Psoas muscle (tissue), 8 donors: ENCODE measurements at regions of chr1 and their contacts with region 1.

Region 1: DNA sequence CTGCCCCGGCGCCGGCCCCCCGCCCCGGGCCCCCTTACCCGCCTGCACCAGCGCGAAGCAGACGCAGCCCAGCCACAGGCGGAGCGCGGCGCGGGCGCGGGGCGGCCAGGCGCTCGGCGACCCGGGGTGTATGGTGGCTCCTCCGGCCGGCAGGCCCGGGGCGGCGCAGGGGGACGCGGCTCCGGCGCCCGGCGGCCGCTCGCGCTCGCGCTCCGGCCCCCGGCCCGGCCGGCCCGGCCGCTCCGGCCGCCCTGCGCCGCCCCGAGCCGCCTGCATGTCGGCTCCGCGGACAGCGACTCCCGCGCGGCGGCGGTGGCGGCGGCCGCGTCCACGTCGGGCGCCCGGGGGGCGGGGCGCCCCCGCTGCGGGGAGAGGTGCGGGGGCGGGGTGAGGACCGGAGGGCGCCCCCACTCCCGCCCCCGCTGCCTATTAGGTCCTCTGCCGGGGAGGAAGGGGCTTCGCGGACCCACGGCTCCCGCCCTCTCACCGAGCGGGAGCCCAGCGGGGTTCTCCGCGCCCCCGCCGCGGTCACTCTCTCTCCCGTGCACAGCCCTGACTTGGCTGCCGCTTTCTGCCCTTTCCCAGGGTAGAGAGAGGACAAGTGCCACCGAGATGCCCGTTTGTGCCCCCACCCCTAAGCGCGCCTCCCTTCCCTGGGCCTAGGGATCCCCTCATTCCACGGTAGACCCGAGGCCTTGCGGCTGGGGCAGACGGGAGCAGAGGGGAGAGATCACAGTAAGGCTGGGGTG is at the start of gene FNDC5:
- DNase-seq: no peak
- ATAC-seq: peak; percentile 28 to 69 (median 63)
- H3K4me3 ChIP-seq: peak within 1 kb of the TSS; percentile 63
- H3K27ac ChIP-seq: peak within 1 kb of the TSS; percentile 69
- H3K4me1 ChIP-seq: peaks cover 9% of the 10 kb centered on the region
- H3K27me3 ChIP-seq: no peaks in the 10 kb centered on the region
- CTCF ChIP-seq: no peak
- total RNA-seq, gene FNDC5: 72.8 to 184 (median 86.6) TPM

Region 2: GRCh38 chr1:32716312-32717148 is 154.3 kb before region 1 on chr1:
- intact Hi-C with region 1: loop called (anchors 5 kb)
- DNase-seq: peak; percentile 42 to 68
- ATAC-seq: peak; percentile 48 to 71 (median 56)
- H3K4me3 ChIP-seq: no peak overlapping the region
- H3K27ac ChIP-seq: no peak overlapping the region
- H3K4me1 ChIP-seq: no peaks in the 10 kb centered on the region
- H3K27me3 ChIP-seq: no peaks in the 10 kb centered on the region
- CTCF ChIP-seq: no peak

Region 3: DNA sequence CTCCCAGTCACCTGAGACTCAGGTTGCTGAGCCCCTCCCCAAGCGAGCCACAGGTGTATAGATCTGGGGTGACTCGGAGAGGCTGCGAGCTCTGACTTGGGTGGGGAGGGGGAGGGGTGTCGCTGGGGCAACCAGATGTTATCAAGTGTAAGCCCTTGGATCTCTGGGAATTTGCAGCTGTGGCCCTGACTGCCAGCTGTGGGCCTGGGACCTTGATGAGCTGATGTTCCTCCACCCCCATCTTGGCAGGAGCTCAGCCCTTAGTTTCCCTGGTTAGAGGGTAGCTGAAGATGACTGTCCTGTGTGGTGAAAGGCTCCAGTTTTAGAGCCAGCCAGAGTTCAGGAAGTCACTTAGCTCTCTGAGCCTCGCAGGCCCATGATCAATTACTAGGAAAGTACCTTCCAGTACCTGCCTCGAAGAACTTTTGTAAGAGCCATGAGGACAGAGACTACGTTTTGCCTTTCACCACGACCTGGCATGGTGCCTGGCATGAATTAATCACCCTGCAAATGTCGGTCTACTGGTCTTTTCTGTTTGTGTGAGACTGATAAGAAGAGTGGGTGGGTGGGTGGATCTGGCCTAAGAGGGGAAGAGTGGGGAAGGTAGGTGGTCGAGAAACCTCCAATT is 109.4 kb before region 1 on chr1:
- intact Hi-C with region 1: no loop called
- DNase-seq: peak in 1 of 2 donors; percentile 58
- ATAC-seq: peak; percentile 39 to 66 (median 48)
- H3K4me3 ChIP-seq: no peak overlapping the region
- H3K27ac ChIP-seq: no peak overlapping the region
- H3K4me1 ChIP-seq: peaks cover 7% of the 10 kb centered on the region
- H3K27me3 ChIP-seq: no peaks in the 10 kb centered on the region
- CTCF ChIP-seq: no peak

Region 4: DNA sequence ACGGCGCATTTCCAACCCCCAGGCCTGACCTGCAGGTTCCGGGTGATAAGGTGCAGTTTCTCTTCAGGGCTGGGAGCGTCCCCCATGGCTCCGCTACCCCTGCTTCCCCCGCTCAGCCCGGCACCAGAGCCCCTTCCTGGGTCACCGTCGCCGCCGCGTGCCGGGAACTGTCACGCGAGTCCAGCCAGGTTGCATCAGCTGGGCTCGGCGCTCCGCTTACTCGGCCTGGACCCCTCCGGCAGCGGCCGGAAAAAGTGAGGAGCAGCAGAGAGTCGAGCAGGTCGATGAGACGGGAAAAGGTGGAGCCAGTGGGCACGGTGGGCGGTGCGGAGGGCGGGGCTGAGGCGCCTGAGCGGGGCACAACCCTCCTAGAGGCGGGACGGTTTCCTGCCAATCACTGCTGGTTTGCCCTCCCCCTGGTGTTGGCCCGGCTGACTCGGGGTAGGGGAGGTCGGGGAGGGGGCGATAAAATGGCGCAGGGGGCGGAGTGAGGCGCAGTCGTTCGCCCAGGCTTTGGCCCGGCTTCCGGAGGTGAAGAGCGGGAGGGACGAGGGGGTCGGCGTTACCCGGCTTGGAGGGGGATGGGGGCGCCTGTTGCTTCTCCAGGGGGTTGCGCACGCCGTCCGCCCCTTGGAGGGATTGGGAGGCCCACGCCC is 53.5 kb before region 1 on chr1 and contains the starts of genes S100PBP and YARS1:
- intact Hi-C with region 1: loop called in 1 of 2 experiments (anchors 5 kb)
- DNase-seq: peak; percentile 100
- ATAC-seq: peak; percentile 95 to 97 (median 96)
- H3K4me3 ChIP-seq: peak within 1 kb of the TSS; percentile 74
- H3K27ac ChIP-seq: peak within 1 kb of the TSS; percentile 94
- H3K4me1 ChIP-seq: peaks cover 43% of the 10 kb centered on the region
- H3K27me3 ChIP-seq: no peaks in the 10 kb centered on the region
- CTCF ChIP-seq: no peak
- total RNA-seq, gene S100PBP: 9.7 to 18.1 (median 12.9) TPM
- total RNA-seq, gene YARS1: 36.9 to 90.2 (median 72.4) TPM

Region 5: GRCh38 chr1:32828341-32828740 is 42.4 kb before region 1 on chr1:
- intact Hi-C with region 1: loop called in 1 of 2 experiments (anchors 5 kb)
- DNase-seq: no peak
- ATAC-seq: no peak
- H3K4me3 ChIP-seq: no peak overlapping the region
- H3K27ac ChIP-seq: no peak overlapping the region
- H3K4me1 ChIP-seq: no peaks in the 10 kb centered on the region
- H3K27me3 ChIP-seq: no peaks in the 10 kb centered on the region
- CTCF ChIP-seq: no peak

Region 6: GRCh38 chr1:32907439-32907838 is 36.6 kb after region 1 on chr1:
- intact Hi-C with region 1: no loop called
- DNase-seq: no peak
- ATAC-seq: no peak
- H3K4me3 ChIP-seq: no peak overlapping the region
- H3K27ac ChIP-seq: no peak overlapping the region
- H3K4me1 ChIP-seq: no peaks in the 10 kb centered on the region
- H3K27me3 ChIP-seq: peaks cover 0 to 5% (median 0%) of the 10 kb centered on the region in 3 donors
- CTCF ChIP-seq: no peak

Region 7: DNA sequence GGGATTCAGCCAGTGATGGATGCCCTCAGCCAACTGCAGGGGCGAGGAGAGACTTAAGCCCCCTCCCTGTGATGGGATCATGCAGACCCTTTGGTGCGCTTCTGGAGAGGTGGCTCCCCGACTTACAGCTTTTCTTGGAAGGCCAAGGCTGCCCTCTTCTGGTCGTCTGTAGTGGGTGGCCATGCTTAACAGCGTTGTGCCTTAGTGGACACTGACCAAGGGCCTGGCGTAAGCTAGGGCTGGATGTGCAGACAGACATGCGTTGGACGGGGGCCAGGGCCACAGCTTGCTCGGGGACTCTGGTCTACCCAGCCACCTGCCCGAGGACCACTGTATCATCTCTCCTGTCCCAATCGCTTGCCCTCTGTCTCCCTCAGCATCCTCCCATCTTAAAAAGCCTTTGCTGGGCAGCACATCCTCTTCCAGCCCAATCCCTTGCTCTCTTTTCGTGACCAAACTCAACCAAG is 215.6 kb after region 1 on chr1:
- intact Hi-C with region 1: loop called (anchors 1 to 5 kb)
- DNase-seq: peak; percentile 78 to 86
- ATAC-seq: peak; percentile 64 to 76 (median 70)
- H3K4me3 ChIP-seq: no peak overlapping the region
- H3K27ac ChIP-seq: no peak overlapping the region
- H3K4me1 ChIP-seq: peaks cover 16% of the 10 kb centered on the region
- H3K27me3 ChIP-seq: no peaks in the 10 kb centered on the region
- CTCF ChIP-seq: peak; percentile 71